AG04450 (cell line): ENCODE measurements at regions of chr11 and their contacts with region 1.

Region 1: DNA sequence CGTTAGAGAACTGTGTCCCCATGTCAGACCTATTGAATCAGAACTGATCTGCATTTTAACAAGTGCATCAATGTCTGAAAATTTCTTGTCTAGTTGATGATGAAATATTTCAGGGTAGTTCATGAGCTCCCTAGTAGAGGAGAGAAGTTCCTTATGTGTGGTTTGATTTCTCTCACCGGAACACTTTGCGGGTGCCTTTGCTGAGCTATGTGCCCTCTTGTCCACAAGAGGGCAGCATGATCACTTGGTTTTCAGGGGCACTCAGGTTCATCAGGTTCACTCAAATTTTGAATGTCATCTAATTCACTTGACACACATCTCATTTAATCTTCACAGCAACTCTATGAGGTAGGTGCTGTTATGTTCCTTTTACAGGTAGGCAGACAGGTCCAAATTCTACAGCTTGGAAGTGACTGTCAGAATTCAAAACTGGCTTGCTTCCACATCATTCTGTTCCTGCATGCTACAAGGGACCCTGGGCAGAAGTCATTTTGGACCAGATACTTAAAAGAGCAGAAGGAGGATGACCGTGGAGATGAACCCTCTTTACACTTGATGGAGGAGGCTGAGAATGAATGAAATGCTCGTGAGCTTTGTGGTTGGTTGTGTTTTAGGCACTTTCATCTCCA is 55.6 kb downstream of the P4HA3 start:
- DNase-seq: no peak
- H3K4me3 ChIP-seq: no peak overlapping the region
- H3K27ac ChIP-seq: no peak overlapping the region
- H3K27me3 ChIP-seq: no peaks in the 10 kb centered on the region
- CTCF ChIP-seq: peak; percentile 96

Region 2: GRCh38 chr11:73965076-73965860 is 290.6 kb before region 1 on chr11:
- CTCF ChIA-PET with region 1: interaction called, 12 read pairs
- POLR2A ChIA-PET with region 1: no interaction called
- DNase-seq: no peak
- H3K4me3 ChIP-seq: no peak overlapping the region
- H3K27ac ChIP-seq: no peak overlapping the region
- H3K27me3 ChIP-seq: peaks cover 8% of the 10 kb centered on the region
- CTCF ChIP-seq: 0 out of 2 replicates have a peak, but pooled peaks have one; percentile 7

Region 3: DNA sequence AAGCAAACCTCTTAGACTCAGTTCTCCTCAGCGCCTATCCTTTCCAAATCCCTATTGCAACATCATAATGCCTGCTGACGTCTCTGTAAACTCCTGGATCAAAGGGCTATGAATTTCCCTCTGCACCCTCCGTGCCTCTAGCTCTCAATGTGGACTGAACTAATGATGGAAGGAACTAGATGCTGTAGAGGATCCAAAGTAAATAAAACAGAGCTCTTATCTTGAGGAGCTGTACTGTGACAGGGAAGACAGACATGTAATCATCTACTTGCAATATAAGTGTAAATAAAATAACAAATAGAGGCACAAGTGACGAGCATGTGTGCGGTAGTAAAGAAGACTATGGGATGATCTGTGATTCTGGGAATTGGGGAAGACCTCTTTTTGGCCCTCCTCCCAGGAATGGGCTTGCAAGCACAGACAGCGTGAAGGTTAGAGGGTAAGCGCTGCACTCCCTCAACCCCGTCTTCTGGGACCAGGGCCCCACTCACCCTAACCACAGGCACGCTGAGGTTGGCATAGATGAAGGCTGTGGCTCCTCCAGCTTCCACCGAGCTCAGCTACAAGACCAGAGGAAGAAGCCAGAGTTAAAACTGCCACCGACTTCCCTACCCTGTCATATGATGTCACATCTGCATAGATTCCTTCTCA is 13.4 kb after region 1 on chr11:
- CTCF ChIA-PET with region 1: interaction called, 30 read pairs
- POLR2A ChIA-PET with region 1: interaction called, 3 read pairs
- DNase-seq: peak; percentile 62
- H3K4me3 ChIP-seq: no peak overlapping the region
- H3K27ac ChIP-seq: peak overlapping the region; percentile 70
- H3K27me3 ChIP-seq: no peaks in the 10 kb centered on the region
- CTCF ChIP-seq: no peak

Region 4: DNA sequence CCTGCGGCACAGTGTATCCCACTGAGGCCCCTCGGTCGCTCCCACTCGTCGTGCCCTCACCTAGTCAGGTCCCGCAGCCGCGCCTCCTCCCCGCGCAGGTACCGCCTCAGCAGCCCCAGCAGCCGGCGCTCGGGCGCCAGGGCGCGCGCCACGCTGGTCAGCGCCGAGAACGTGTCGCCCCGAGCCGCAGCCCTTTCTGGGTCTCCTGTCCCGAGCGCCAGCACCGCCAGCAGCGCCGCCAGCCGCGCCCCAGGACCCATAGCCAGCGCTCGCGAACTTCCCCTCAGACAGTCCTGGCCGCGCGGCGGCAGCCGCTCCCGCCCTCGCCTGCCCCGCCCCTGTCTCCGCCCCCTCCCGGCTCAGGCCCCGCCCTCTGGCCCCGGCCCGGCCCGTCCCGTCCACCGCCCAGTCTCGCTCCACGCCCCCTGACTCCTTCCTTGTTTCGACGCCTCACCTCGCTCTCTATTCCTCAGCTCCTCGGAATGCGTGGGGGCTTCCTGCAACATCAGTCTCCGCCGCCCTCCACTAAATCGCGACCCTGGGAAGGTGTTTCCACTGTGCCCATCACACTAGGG is 55.6 kb after region 1 on chr11 and contains the start of gene P4HA3:
- CTCF ChIA-PET with region 1: interaction called, 10 read pairs
- POLR2A ChIA-PET with region 1: no interaction called
- DNase-seq: no peak
- H3K4me3 ChIP-seq: peak within 1 kb of the TSS; percentile 64
- H3K27ac ChIP-seq: no peak within 1 kb of the TSS
- H3K27me3 ChIP-seq: no peaks in the 10 kb centered on the region
- CTCF ChIP-seq: no peak
- polyA plus RNA-seq, gene P4HA3: 8.5 and 10.7 TPM in 2 replicates

Region 5: GRCh38 chr11:74388678-74389327 is 132.9 kb after region 1 on chr11:
- CTCF ChIA-PET with region 1: interaction called, 16 read pairs
- POLR2A ChIA-PET with region 1: no interaction called
- DNase-seq: no peak
- H3K4me3 ChIP-seq: no peak overlapping the region
- H3K27ac ChIP-seq: no peak overlapping the region
- H3K27me3 ChIP-seq: no peaks in the 10 kb centered on the region
- CTCF ChIP-seq: peak; percentile 84

Region 6: GRCh38 chr11:74443071-74443864 is 187.4 kb after region 1 on chr11:
- CTCF ChIA-PET with region 1: interaction called, 172 read pairs
- POLR2A ChIA-PET with region 1: no interaction called
- DNase-seq: no peak
- H3K4me3 ChIP-seq: no peak overlapping the region
- H3K27ac ChIP-seq: no peak overlapping the region
- H3K27me3 ChIP-seq: peaks cover 2% of the 10 kb centered on the region
- CTCF ChIP-seq: no peak

Region 7: GRCh38 chr11:74570266-74571061 is 314.6 kb after region 1 on chr11:
- CTCF ChIA-PET with region 1: interaction called, 15 read pairs
- POLR2A ChIA-PET with region 1: no interaction called
- DNase-seq: no peak
- H3K4me3 ChIP-seq: no peak overlapping the region
- H3K27ac ChIP-seq: no peak overlapping the region
- H3K27me3 ChIP-seq: peaks cover 12% of the 10 kb centered on the region
- CTCF ChIP-seq: peak; percentile 75